Right cardiac atrium (tissue), 5 donors: ENCODE measurements at regions of chr5 and their contacts with region 1.

Region 1: DNA sequence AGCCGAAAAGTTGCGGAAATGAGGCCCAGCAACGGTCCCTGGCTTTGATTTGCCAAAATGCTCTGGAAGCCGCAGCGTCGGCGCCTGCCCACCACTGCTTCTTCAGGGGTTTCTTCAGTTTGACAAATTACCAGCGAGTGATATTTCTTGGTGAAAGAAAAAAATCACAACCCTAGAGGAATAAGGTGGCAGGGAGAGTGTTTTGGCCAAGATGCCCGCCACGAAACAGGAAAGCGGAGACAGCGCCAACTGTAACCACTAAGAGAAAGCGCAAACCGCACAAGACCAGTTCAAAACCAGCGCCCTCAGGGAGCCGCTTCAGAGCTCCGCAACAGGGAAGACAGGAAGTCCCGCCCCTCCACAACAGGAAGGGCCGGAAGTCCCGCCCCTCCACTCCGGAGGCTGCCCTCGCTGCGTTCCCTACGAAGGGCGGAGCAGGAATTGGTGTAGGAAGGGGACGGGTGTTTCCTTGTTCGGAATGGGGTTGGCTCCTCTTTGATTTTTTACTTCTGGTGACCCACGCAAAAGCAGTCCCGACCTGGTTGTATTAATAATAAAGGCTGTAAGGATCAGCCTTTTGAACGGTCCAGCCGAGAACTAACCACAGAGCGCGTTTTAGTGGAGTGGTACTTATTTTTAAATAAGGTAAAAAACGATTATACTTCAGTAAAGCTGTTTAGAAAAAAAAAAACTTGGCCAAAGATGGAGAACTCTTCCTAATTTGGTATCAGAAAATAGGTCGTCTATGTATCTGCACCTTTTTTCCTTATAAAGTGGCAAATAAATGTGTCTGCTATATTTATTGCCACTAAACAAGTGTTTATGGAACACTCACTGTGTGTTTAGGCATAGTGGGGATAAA is at the start of gene C5orf34:
- DNase-seq: peak; percentile 96 to 98 (median 98)
- ATAC-seq: peak; percentile 100
- H3K4me3 ChIP-seq: peak within 1 kb of the TSS; percentile 97
- H3K27ac ChIP-seq: peak within 1 kb of the TSS; percentile 91
- H3K4me1 ChIP-seq: peaks cover 3% of the 10 kb centered on the region
- H3K27me3 ChIP-seq: no peaks in the 10 kb centered on the region
- total RNA-seq, gene C5orf34: 0.40 to 1.5 (median 0.52) TPM

Region 2: DNA sequence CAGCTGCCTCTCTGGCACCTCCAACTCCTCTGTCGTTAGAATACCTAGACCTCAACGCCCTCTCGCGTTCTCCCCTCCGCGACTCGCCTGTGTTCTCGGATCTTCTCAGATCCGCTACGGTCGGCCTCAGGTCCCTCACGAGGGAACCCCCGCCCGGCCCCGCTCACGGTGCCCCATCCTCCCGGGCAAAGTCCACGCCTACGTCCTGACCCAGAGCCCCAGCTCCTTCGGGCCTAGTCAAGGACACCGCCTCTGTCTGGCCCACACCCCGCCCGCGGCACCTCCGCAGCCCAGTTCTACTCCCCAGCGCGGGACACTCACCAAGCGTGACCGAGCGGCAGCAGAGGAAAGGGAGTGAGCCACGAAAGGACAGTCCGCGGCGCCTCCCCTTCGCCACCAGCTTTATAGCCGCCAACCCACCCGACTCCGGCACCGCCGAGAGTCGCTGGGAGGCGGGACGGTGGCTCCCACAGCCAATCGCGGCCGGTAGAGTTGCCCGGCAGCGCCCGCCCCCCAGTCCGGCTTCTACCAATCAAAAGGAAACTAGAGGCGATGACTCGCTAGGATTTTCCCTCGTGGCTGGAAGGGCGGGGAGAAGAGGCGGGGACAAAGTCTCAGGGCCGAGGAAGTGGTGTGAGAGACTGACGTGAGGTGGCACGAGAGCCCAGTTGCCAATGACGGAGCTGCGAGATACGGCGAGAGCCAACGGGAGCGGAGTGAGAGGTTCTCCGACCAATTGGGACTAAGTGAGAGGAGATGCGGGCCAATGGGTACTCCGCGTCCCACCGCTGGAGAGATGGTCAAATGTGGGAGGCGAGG is 201.8 kb before region 1 on chr5 and contains the start of gene HMGCS1:
- intact Hi-C with region 1: loop called in 1 of 4 experiments (anchors 10 kb)
- DNase-seq: peak; percentile 99
- ATAC-seq: peak; percentile 99
- H3K4me3 ChIP-seq: peak within 1 kb of the TSS; percentile 65
- H3K27ac ChIP-seq: peak within 1 kb of the TSS; percentile 90
- H3K4me1 ChIP-seq: peaks cover 8% of the 10 kb centered on the region
- H3K27me3 ChIP-seq: no peaks in the 10 kb centered on the region
- total RNA-seq, gene HMGCS1: 18.2 to 36.1 (median 26.5) TPM